Transverse colon (tissue), 4 donors: ENCODE measurements at regions of chr3 and their contacts with region 1.

Region 1: GRCh38 chr3:72088486-72089025 is 303.6 kb upstream of the PROK2 start:
- DNase-seq: no peak
- H3K4me3 ChIP-seq: no peak overlapping the region
- H3K27ac ChIP-seq: no peak overlapping the region
- H3K4me1 ChIP-seq: no peaks in the 10 kb centered on the region
- H3K27me3 ChIP-seq: no peaks in the 10 kb centered on the region
- CTCF ChIP-seq: no peak
- EP300 ChIP-seq: no peak
- POLR2A ChIP-seq: no peak

Region 2: DNA sequence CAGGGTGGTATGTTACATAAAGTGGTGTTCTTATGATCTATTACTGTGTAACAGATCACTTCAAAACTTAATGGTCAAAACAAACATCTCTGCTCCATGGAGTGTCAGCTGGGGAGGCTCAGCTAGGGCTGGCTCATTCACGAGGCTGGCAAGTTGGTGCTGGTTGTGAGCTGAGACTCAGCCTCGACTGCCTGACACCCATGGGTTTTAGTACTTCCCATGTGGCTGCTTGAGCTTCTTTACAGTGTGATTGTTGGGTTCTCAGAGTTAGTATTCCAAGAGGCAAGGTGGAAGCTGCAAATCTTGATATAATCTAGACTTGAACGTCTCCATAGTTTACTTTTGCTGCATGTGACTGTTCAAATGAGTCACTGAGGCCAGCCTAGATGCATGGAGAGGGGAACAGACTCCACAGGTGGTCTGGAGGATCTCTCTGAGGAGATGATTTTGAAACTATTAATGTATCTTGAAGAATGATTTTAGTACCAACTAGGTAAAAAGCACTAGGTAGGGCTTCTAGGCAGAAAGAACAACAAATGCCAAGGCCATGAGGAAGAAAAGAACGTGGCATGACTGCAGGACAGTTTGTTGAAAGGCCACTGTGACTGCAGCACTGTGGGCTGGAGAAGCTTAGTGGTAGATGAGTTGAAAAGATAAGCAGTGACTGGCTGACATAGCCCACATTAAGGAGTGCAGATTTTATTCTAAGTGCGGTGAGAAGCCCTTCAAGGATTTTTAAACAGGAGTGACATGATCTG is 22.5 kb before region 1 on chr3:
- in situ Hi-C with region 1: no loop called
- intact Hi-C with region 1: loop called (anchors 1 kb)
- DNase-seq: no peak
- H3K4me3 ChIP-seq: no peak overlapping the region
- H3K27ac ChIP-seq: no peak overlapping the region
- H3K4me1 ChIP-seq: no peaks in the 10 kb centered on the region
- H3K27me3 ChIP-seq: no peaks in the 10 kb centered on the region
- CTCF ChIP-seq: no peak
- EP300 ChIP-seq: no peak
- POLR2A ChIP-seq: no peak

Region 3: GRCh38 chr3:72100601-72101187 is 12.1 kb after region 1 on chr3:
- in situ Hi-C with region 1: no loop called
- intact Hi-C with region 1: no loop called
- DNase-seq: peak; percentile 85
- H3K4me3 ChIP-seq: peak overlapping the region in 3 of 4 donors; percentile 5 to 32 (median 15)
- H3K27ac ChIP-seq: peak overlapping the region in 2 of 4 donors; percentile 25 to 33
- H3K4me1 ChIP-seq: peaks cover 5 to 26% (median 11%) of the 10 kb centered on the region in 4 donors
- H3K27me3 ChIP-seq: peaks cover 19% of the 10 kb centered on the region
- CTCF ChIP-seq: no peak
- EP300 ChIP-seq: no peak
- POLR2A ChIP-seq: no peak

Region 4: DNA sequence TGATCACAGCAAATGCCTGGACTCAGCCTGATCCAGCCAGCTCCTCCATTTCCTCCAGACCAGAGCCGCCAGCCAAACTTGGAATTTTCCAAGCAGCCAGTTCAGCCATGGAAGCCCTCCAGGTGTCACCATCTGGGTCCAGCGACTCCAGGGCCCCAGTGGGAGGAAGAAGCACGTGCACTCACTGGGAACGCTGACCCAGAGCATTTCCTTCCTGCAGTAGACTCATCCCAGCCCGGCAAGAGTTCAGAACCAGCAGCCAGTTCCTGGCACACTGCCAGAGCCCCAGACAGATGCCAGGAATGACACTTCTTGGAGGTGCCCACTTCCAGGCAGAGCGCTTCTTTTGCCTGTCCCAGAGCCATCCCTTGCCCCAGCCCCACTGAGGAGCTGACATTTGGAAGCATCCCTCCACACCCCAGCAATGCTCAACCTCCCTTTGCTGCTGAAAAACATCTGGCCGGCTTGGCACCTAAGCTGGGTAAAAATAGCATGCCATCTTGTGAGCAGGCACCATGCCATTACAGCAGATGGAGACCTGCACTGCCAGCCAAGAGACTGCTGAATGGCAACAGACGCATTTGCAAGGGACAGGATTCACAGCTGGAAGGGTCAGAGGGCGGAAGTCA is 156.7 kb after region 1 on chr3:
- in situ Hi-C with region 1: no loop called
- intact Hi-C with region 1: no loop called
- DNase-seq: no peak
- H3K4me3 ChIP-seq: no peak overlapping the region
- H3K27ac ChIP-seq: peak overlapping the region in 2 of 4 donors; percentile 3 to 45
- H3K4me1 ChIP-seq: peaks cover 0 to 22% (median 7%) of the 10 kb centered on the region in 4 donors
- H3K27me3 ChIP-seq: no peaks in the 10 kb centered on the region
- CTCF ChIP-seq: no peak
- EP300 ChIP-seq: no peak
- POLR2A ChIP-seq: no peak